ENCODE measurements at regions of chr7 and their contacts with region 1.

Region 1: GRCh38 chr7:134932707-134933370 is 53.5 kb upstream of the AGBL3 start:
- DNase-seq: peak in 2 of 10 donors; percentile 15 to 48
- H3K4me3 ChIP-seq: peak overlapping the region in 8 of 59 donors; percentile 0 to 14 (median 4)
- H3K27ac ChIP-seq: peak overlapping the region in 47 of 59 donors; percentile 6 to 81 (median 58)
- H3K27me3 ChIP-seq: no peaks in the 10 kb centered on the region
- CTCF ChIP-seq: no peak

Region 2: GRCh38 chr7:134891262-134891695 is 41.6 kb before region 1 on chr7:
- intact Hi-C with region 1: loop called (anchors 5 kb)
- DNase-seq: peak; percentile 59 to 89 (median 82)
- H3K4me3 ChIP-seq: peak overlapping the region; percentile 49 to 90 (median 71)
- H3K27ac ChIP-seq: peak overlapping the region in 58 of 59 donors; percentile 53 to 96 (median 89)
- H3K27me3 ChIP-seq: no peaks in the 10 kb centered on the region
- CTCF ChIP-seq: peak in 9 of 56 donors; percentile 4 to 23 (median 10)

Region 3: GRCh38 chr7:134899729-134900128 is 33.1 kb before region 1 on chr7:
- intact Hi-C with region 1: loop called (anchors 5 kb)
- DNase-seq: no peak
- H3K4me3 ChIP-seq: no peak overlapping the region
- H3K27ac ChIP-seq: peak overlapping the region in 24 of 59 donors; percentile 2 to 63 (median 41)
- H3K27me3 ChIP-seq: no peaks in the 10 kb centered on the region
- CTCF ChIP-seq: no peak

Measured in dorsolateral prefrontal cortex (tissue), 120 donors.